Psoas muscle (tissue), 8 donors: ENCODE measurements at regions of chr17 and their contacts with region 1.

Region 1: DNA sequence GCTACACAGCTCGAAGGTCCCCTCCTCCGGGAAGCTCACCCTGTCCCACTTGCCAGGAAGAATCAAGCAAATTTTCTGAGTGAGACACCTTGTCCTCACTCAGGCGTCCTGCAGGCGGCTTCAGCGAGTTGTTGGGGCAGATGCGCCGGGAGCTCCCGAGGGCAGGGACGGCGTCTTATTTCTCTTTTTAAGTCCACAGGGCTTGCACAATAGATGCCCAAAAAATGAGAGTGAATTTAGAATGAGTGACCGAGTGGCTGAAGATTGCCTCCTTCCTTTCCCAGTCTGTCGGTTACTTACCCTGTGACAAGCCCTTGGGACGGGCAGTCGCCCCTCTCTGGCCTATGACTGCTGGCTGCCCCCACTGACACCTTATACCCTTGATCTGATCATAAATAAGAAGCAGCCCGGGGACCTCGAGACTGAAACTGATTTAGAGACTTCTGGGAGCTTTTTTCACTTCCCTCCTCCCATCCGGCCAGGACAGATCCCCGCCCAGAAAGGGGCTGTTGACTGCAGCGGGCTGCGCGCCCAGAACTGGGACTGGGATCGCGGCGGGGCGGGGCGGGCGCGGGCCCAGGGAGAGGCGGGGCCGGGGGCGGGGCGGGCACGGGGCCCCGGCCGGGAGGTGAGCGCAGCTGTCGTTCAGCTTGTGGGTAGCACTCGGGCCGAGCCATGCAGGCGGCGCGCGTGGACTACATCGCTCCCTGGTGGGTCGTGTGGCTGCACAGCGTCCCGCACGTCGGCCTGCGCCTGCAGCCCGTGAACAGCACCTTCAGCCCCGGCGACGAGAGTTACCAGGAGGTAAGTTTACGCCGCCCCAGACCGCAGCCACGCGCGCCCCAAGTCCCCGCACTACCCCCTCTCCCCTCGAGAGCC is at the start of gene TTYH2:
- DNase-seq: peak; percentile 92 to 94
- ATAC-seq: peak; percentile 74 to 78 (median 75)
- H3K4me3 ChIP-seq: peak within 1 kb of the TSS; percentile 60
- H3K27ac ChIP-seq: peak within 1 kb of the TSS; percentile 96
- H3K4me1 ChIP-seq: peaks cover 44% of the 10 kb centered on the region
- H3K27me3 ChIP-seq: no peaks in the 10 kb centered on the region
- CTCF ChIP-seq: peak; percentile 33
- total RNA-seq, gene TTYH2: 5.1 to 16.4 (median 7.7) TPM

Region 2: DNA sequence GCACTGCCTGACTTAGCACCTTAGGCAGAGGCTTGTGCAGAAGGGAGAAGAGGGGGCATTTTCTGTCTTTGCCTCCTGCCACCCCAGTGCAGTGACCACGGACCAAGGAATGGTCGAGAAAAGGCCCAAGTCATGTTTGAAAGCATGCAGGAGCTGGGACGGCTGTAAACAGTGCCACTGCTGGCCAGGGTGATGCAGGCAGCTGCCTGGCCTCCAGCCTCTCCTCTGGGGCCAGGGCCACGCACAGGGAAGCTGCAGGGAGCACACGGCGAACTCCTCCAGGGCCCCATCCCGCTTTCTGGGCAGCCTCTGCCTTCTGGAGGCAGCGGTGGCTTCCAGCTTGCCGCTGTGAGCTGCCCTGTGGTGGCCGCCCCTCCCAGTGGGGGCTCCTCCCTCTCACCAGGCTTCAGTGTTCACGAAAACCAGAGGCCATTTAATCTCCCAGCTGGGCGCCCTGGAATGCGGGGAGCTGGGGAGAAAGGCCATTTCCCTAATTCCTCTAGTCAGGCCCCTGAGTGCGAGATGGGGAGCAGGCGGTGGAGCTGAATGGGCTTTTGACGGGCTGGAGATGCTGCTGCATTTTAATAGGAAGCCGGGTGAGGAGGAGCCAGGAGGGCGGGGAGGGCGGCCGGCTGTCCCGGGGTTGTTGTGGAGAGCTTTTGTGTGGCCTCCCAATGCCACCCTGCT is 32.1 kb after region 1 on chr17:
- intact Hi-C with region 1: no loop called
- DNase-seq: no peak
- ATAC-seq: no peak
- H3K4me3 ChIP-seq: no peak overlapping the region
- H3K27ac ChIP-seq: no peak overlapping the region
- H3K4me1 ChIP-seq: peaks cover 16% of the 10 kb centered on the region
- H3K27me3 ChIP-seq: no peaks in the 10 kb centered on the region
- CTCF ChIP-seq: no peak

Region 3: DNA sequence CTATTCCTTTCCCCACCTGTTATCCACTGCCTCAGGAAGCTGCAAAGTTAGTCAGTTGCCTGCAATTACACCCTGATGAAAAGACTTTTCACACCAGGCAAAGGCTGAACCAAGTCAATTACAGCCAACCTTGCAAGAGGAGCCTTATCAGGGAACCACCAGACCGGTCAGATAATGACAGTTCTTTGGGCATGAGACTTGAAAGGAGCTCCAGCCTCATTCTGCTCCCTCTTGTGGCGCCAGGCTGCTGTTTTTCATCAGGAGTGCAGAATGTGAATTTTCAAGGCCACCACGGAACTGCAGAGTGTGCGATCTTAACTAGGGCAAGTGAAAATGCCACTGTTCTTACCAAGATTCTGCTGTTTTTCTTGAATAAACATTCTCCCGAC is 83.4 kb after region 1 on chr17:
- intact Hi-C with region 1: loop called (anchors 2 kb)
- DNase-seq: peak; percentile 50 to 76
- ATAC-seq: peak; percentile 56 to 80 (median 71)
- H3K4me3 ChIP-seq: no peak overlapping the region
- H3K27ac ChIP-seq: no peak overlapping the region
- H3K4me1 ChIP-seq: no peaks in the 10 kb centered on the region
- H3K27me3 ChIP-seq: no peaks in the 10 kb centered on the region
- CTCF ChIP-seq: peak; percentile 55

Region 4: DNA sequence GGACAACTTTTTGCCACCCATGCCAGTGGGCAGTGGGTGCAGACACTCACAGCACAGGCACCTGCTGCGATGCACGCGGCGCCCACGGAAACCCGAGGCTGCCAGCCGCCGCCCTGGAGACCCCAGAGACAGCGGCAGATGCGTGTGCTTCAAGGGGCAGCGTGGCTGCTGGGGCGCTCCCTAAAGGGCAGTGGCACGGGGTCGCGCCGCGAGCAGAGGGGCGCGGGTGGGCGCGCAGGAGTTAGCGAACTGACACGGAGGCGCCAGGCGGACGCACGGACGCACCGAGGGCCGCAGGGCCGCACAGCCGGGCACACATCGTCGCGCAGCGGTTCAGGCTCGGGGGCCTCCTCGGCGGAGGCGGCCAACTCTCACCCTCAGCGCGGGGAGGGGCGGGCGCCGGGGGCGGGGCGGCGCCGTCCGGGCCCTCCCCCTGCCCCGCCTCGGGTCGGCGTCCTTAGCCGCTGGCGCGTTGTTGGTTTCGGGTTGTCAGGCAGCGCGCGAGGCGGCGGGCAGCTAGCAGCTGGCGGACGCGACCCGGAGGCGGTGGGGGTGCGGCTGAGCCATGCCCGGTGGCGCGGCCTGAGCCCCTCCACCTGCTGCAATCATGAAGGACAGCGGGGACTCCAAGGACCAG is 112.7 kb after region 1 on chr17 and contains the start of gene KIF19:
- intact Hi-C with region 1: no loop called
- DNase-seq: peak; percentile 62 to 72
- ATAC-seq: peak; percentile 83 to 94 (median 89)
- H3K4me3 ChIP-seq: peak within 1 kb of the TSS; percentile 68
- H3K27ac ChIP-seq: no peak within 1 kb of the TSS
- H3K4me1 ChIP-seq: peaks cover 14% of the 10 kb centered on the region
- H3K27me3 ChIP-seq: no peaks in the 10 kb centered on the region
- CTCF ChIP-seq: no peak
- total RNA-seq, gene KIF19: 0.17 to 0.44 (median 0.29) TPM

Region 5: DNA sequence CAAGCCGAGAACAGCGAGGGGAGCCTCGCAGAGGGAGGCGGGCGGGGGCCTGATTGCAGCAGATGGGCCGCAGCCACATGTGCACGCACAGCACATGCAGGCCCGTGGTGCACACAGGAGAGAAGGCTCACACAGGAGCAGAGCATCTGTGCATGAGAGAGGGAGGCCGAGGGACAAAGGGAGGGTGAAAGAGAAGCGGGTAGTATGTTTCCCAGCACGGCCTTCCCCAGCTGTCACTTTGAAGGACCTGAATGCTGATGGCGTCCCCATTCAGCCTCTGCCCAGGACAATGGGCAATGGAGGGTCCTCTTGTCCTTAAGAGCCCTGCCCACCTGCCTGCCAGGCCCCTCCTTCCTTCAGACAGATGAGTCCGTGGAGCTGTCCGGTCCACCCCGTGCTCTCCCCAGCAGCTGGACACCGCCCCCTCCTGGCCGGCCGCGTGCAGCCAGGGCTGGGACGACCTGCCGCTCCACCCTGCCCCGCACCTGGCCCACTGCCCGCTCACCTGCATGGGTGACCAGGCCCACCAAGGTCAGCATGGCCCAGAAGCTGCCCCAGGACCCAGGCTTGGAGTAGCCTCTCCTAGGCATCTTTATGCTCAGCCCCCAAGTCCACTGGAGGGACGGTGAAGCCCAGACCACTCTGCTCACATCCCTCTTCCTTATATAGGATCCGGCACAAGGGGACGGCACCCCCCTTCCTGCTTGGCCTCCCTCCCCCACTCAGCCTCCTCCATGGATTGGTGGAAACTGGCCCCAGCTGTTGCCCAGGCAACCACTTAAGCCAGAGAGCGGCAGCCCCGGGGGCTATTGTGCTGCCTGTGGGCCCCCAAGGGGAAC is 148.3 kb after region 1 on chr17 and contains the start of gene BTBD17:
- intact Hi-C with region 1: loop called (anchors 5 to 10 kb)
- DNase-seq: peak; percentile 52 to 77
- ATAC-seq: peak; percentile 78 to 86 (median 78)
- H3K4me3 ChIP-seq: no peak within 1 kb of the TSS
- H3K27ac ChIP-seq: no peak within 1 kb of the TSS
- H3K4me1 ChIP-seq: no peaks in the 10 kb centered on the region
- H3K27me3 ChIP-seq: peaks cover 0 to 49% (median 13%) of the 10 kb centered on the region in 3 donors
- CTCF ChIP-seq: peak; percentile 63
- total RNA-seq, gene BTBD17: not detected

Region 6: GRCh38 chr17:74368092-74369081 is 155.2 kb after region 1 on chr17:
- intact Hi-C with region 1: loop called (anchors 5 to 10 kb)
- DNase-seq: peak; percentile 73 to 87
- ATAC-seq: peak; percentile 83 to 96 (median 91)
- H3K4me3 ChIP-seq: no peak overlapping the region
- H3K27ac ChIP-seq: no peak overlapping the region
- H3K4me1 ChIP-seq: no peaks in the 10 kb centered on the region
- H3K27me3 ChIP-seq: no peaks in the 10 kb centered on the region
- CTCF ChIP-seq: peak; percentile 89

Region 7: GRCh38 chr17:74430706-74431567 is 217.8 kb after region 1 on chr17:
- intact Hi-C with region 1: loop called in 1 of 2 experiments (anchors 5 kb)
- DNase-seq: peak; percentile 93 to 97
- ATAC-seq: peak; percentile 75 to 82 (median 78)
- H3K4me3 ChIP-seq: peak overlapping the region; percentile 90
- H3K27ac ChIP-seq: peak overlapping the region; percentile 98
- H3K4me1 ChIP-seq: peaks cover 42% of the 10 kb centered on the region
- H3K27me3 ChIP-seq: peaks cover 0 to 2% (median 0%) of the 10 kb centered on the region in 3 donors
- CTCF ChIP-seq: no peak

Region 8: GRCh38 chr17:74457146-74457819 is 244.1 kb after region 1 on chr17:
- intact Hi-C with region 1: loop called in 1 of 2 experiments (anchors 10 kb)
- DNase-seq: peak; percentile 83 to 91
- ATAC-seq: peak; percentile 43 to 62 (median 50)
- H3K4me3 ChIP-seq: peak overlapping the region; percentile 34
- H3K27ac ChIP-seq: peak overlapping the region; percentile 63
- H3K4me1 ChIP-seq: peaks cover 32% of the 10 kb centered on the region
- H3K27me3 ChIP-seq: no peaks in the 10 kb centered on the region
- CTCF ChIP-seq: peak; percentile 93